KBM-7 (cell line): ENCODE measurements at regions of chr3 and their contacts with region 1.

Region 1: GRCh38 chr3:151630938-151631441 is 102.7 kb upstream of the AADACL2 start:
- DNase-seq: peak; percentile 35

Region 2: DNA sequence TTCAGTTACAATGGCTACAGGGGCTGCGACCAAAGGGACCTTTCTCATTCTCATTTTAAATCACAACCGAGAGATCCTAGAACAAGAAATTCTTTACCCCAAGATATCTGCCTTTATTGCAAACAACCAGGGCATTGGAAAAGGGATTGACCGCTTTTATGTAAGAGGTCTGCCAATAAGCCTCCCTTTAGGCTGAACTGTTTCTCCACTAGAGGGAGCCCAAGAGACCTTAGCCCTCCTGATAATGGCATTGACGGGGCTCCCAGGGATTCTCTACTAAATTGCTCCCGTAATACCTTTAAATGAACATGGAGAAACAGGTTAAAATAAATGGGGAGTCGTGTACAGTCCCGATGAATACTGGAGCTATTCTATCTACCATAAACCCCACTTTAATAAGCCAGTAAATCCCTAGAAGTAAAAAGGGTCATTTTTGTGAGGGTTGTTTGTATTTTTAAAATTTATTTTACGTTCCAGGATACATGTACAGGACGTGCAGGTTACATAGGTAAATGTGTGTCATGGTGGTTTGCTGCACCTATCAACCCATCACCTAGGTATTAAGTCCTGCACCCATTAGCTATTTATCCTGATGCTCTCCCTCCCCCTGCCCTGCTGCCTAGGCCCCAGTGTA is 162.6 kb before region 1 on chr3:
- in situ Hi-C with region 1: loop called (anchors 25 kb)
- DNase-seq: peak; percentile 74